Calu3 (cell line): ENCODE measurements at regions of chr5 and their contacts with region 1.

Region 1: DNA sequence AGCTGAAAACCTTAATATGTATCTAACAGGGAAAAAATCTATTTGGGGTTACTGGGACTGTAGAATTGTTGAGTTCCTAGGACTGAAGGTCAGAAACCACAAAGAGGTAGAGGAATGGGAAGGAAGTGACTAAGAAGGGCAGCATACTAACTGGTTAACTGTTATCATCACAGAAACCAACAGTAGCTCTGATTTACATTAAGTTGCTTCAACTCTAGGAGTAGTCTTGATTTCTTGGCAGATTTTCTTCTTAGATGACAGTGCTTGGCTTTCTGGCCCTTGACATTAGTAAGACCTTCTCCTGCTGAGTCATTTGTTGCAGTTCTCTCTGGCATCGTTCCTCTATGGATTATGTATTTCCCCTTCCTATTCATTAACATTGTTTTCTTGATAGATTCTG is 116.1 kb upstream of the RASA1 start:
- DNase-seq: no peak
- H3K4me3 Mint-ChIP-seq: no peak overlapping the region
- H3K27ac Mint-ChIP-seq: peak overlapping the region; percentile 74
- H3K4me1 Mint-ChIP-seq: peaks cover 76% of the 10 kb centered on the region
- H3K27me3 Mint-ChIP-seq: no peaks in the 10 kb centered on the region
- CTCF ChIP-seq: no peak

Region 2: DNA sequence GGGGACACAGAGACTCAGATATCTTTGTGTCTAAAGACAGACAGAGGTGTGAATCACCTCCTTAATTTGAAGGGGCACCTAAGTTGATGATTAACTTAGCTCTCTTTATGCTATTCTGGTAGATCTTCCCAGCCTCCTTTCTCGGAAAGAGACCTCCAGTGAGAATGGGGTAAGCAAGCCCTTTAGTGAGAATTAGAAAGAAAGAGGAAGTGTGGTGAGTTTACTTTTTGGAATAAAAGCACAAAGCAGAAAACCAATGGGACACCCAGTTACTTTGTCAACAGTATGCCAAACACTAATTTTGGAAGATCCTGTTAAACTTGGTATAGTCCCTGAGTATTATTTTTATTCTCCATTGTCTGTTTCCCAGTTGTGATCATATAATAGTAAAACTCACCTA is 186.7 kb before region 1 on chr5:
- CTCF ChIA-PET with region 1: no interaction called
- intact Hi-C with region 1: no loop called
- DNase-seq: no peak
- H3K4me3 Mint-ChIP-seq: no peak overlapping the region
- H3K27ac Mint-ChIP-seq: no peak overlapping the region
- H3K4me1 Mint-ChIP-seq: peaks cover 23% of the 10 kb centered on the region
- H3K27me3 Mint-ChIP-seq: no peaks in the 10 kb centered on the region
- CTCF ChIP-seq: no peak

Region 3: GRCh38 chr5:87164409-87164808 is 12.9 kb after region 1 on chr5:
- CTCF ChIA-PET with region 1: interaction called, 16 read pairs
- intact Hi-C with region 1: no loop called
- DNase-seq: no peak
- H3K4me3 Mint-ChIP-seq: no peak overlapping the region
- H3K27ac Mint-ChIP-seq: no peak overlapping the region
- H3K4me1 Mint-ChIP-seq: peaks cover 7% of the 10 kb centered on the region
- H3K27me3 Mint-ChIP-seq: no peaks in the 10 kb centered on the region
- CTCF ChIP-seq: no peak